Heart right ventricle (tissue), 16 donors: ENCODE measurements at regions of chr13 and their contacts with region 1.

Region 1: GRCh38 chr13:112959206-112959605 is 9.8 kb upstream of the MCF2L start:
- DNase-seq: peak in 1 of 2 donors; percentile 79
- ATAC-seq: peak; percentile 72 to 90 (median 88)
- H3K4me3 ChIP-seq: peak overlapping the region in 2 of 10 donors; percentile 17 to 27
- H3K27ac ChIP-seq: peak overlapping the region; percentile 70 to 96 (median 88)
- H3K4me1 ChIP-seq: peaks cover 4 to 53% (median 12%) of the 10 kb centered on the region in 9 donors
- H3K27me3 ChIP-seq: no peaks in the 10 kb centered on the region
- CTCF ChIP-seq: no peak

Region 2: DNA sequence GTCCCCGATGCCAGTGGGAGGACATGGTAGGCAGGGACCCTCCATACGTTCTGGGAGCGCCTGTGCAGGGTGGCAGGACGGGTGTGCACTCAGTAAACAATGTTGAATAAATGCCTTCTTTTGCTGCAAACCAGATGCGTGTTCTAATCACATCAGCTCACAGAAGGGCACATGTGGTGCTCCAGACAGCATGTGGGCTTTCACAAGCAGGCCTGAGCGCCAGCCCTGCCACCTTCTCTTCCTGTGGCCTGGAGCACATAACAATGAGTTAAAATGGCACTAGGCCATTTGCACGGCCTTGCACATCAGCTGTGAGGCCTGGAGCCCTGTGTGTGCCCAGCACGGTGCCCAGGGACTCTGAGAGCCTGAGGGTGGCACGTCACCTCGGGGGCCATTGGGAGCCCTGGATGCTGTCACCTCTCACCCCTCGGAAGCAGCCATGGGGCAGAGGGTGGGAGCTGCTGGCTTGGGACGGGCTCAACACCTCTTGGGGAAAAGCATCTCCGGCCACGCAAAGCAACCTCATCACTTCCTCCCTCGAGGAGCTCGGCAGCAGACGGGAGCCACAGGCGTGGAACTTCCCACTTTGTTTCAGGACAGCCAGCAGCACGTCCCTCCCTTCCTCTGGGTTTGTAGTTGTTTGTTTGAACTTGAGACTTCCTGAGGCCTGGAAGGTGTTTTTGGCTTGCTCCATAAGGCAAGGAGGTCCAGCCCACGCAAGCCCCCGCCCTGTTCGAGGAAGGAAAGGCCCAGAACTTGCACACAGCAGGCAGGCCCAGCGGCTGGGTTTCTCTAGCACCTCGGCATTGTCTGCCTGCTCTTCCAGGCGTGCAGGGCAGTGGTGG is 19.6 kb after region 1 on chr13:
- intact Hi-C with region 1: loop called in 2 of 10 experiments (anchors 2 kb)
- DNase-seq: peak; percentile 62 to 80
- ATAC-seq: peak; percentile 34 to 81 (median 71)
- H3K4me3 ChIP-seq: peak overlapping the region; percentile 41 to 68 (median 56)
- H3K27ac ChIP-seq: peak overlapping the region; percentile 80 to 95 (median 88)
- H3K4me1 ChIP-seq: peaks cover 8 to 44% (median 20%) of the 10 kb centered on the region in 9 donors
- H3K27me3 ChIP-seq: no peaks in the 10 kb centered on the region
- CTCF ChIP-seq: no peak

Region 3: GRCh38 chr13:113001241-113002140 is 42.3 kb after region 1 on chr13:
- intact Hi-C with region 1: loop called in 1 of 10 experiments (anchors 10 kb)
- DNase-seq: no peak
- ATAC-seq: peak; percentile 8 to 77 (median 62)
- H3K4me3 ChIP-seq: peak overlapping the region in 9 of 10 donors; percentile 21 to 56 (median 42)
- H3K27ac ChIP-seq: peak overlapping the region in 6 of 10 donors; percentile 23 to 47 (median 40)
- H3K4me1 ChIP-seq: peaks cover 14 to 73% (median 54%) of the 10 kb centered on the region in 9 donors
- H3K27me3 ChIP-seq: peaks cover 0 to 24% (median 0%) of the 10 kb centered on the region in 7 donors
- CTCF ChIP-seq: no peak

Region 4: GRCh38 chr13:113022391-113023216 is 63.4 kb after region 1 on chr13:
- intact Hi-C with region 1: loop called in 1 of 10 experiments (anchors 1 kb)
- DNase-seq: peak in 1 of 2 donors; percentile 25
- ATAC-seq: peak; percentile 31 to 72 (median 50)
- H3K4me3 ChIP-seq: peak overlapping the region in 2 of 10 donors; percentile 5 to 10
- H3K27ac ChIP-seq: peak overlapping the region; percentile 8 to 78 (median 47)
- H3K4me1 ChIP-seq: peaks cover 3 to 39% (median 18%) of the 10 kb centered on the region in 9 donors
- H3K27me3 ChIP-seq: no peaks in the 10 kb centered on the region
- CTCF ChIP-seq: no peak